B cell (primary cell): ENCODE measurements at regions of chr1 and their contacts with region 1.

Region 1: GRCh38 chr1:26787706-26788514 is at the start of gene PIGV:
- DNase-seq: peak; percentile 95
- ATAC-seq: peak; percentile 77
- H3K4me3 ChIP-seq: peak within 1 kb of the TSS; percentile 75 to 94 (median 91)
- H3K4me3 Mint-ChIP-seq: peak within 1 kb of the TSS; percentile 91
- H3K27ac ChIP-seq: peak within 1 kb of the TSS; percentile 82 to 86
- H3K27ac Mint-ChIP-seq: peak within 1 kb of the TSS; percentile 99
- H3K4me1 ChIP-seq: peaks cover 30 to 44% of the 10 kb centered on the region in 2 donors
- H3K4me1 Mint-ChIP-seq: peaks cover 48% of the 10 kb centered on the region
- H3K27me3 ChIP-seq: no peaks in the 10 kb centered on the region
- H3K27me3 Mint-ChIP-seq: no peaks in the 10 kb centered on the region
- CTCF ChIP-seq: no peak
- total RNA-seq, gene PIGV: 16.1 and 17.4 TPM in 2 replicates

Region 2: DNA sequence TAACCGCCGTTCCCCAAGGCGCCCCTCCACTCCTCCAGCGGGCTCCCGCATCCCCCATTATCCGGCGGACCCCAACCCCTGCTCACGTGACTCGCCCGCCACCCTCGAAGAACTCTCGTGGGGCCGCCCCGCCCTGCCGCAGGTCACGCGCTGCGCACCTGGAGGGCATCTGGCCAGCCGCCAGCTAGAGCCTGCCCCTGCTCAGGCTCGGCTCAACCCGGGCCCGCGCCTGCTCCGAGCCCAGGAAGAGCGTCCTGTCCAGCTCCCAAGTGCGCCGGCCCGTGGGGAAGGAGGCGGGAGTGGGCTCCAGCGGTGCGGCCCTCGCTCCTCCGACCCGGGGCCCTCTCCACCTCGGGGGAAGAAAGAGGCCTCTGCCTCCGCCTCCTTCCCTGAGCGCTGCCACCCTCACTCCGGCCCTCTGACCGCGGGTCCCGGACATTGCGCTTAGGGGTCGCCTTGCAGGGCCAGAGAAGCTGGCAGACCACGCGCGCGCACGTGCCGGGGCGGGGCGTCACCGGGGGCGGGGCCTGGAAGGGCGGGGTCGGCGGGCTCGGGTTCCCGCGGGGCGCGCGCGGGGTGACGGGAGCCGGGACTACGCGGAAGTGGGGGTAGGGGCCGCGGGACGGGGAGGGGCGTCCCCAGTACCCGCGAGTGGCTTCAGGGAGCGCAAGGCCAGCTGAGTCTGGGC is 287.3 kb before region 1 on chr1:
- CTCF ChIA-PET with region 1: interaction called, 37 read pairs
- POLR2A ChIA-PET with region 1: interaction called, 4 read pairs
- intact Hi-C with region 1: loop called (anchors 1 kb)
- DNase-seq: peak; percentile 96
- ATAC-seq: peak; percentile 75
- H3K4me3 ChIP-seq: peak overlapping the region in 4 of 5 experiments; percentile 74 to 93 (median 88)
- H3K4me3 Mint-ChIP-seq: peak overlapping the region; percentile 91
- H3K27ac ChIP-seq: peak overlapping the region; percentile 100
- H3K27ac Mint-ChIP-seq: peak overlapping the region; percentile 98
- H3K4me1 ChIP-seq: peaks cover 7 to 19% of the 10 kb centered on the region in 2 donors
- H3K4me1 Mint-ChIP-seq: peaks cover 8% of the 10 kb centered on the region
- H3K27me3 ChIP-seq: no peaks in the 10 kb centered on the region
- H3K27me3 Mint-ChIP-seq: no peaks in the 10 kb centered on the region
- CTCF ChIP-seq: peak; percentile 44

Region 3: GRCh38 chr1:26602378-26602959 is 185.4 kb before region 1 on chr1:
- CTCF ChIA-PET with region 1: interaction called, 479 read pairs
- POLR2A ChIA-PET with region 1: interaction called, 22 read pairs
- intact Hi-C with region 1: loop called (anchors 1 kb)
- DNase-seq: peak; percentile 78
- ATAC-seq: peak; percentile 62
- H3K4me3 ChIP-seq: no peak overlapping the region
- H3K4me3 Mint-ChIP-seq: no peak overlapping the region
- H3K27ac ChIP-seq: no peak overlapping the region
- H3K27ac Mint-ChIP-seq: no peak overlapping the region
- H3K4me1 ChIP-seq: peaks cover 0 to 5% of the 10 kb centered on the region in 2 donors
- H3K4me1 Mint-ChIP-seq: peaks cover 6% of the 10 kb centered on the region
- H3K27me3 ChIP-seq: no peaks in the 10 kb centered on the region
- H3K27me3 Mint-ChIP-seq: no peaks in the 10 kb centered on the region
- CTCF ChIP-seq: peak; percentile 92

Region 4: DNA sequence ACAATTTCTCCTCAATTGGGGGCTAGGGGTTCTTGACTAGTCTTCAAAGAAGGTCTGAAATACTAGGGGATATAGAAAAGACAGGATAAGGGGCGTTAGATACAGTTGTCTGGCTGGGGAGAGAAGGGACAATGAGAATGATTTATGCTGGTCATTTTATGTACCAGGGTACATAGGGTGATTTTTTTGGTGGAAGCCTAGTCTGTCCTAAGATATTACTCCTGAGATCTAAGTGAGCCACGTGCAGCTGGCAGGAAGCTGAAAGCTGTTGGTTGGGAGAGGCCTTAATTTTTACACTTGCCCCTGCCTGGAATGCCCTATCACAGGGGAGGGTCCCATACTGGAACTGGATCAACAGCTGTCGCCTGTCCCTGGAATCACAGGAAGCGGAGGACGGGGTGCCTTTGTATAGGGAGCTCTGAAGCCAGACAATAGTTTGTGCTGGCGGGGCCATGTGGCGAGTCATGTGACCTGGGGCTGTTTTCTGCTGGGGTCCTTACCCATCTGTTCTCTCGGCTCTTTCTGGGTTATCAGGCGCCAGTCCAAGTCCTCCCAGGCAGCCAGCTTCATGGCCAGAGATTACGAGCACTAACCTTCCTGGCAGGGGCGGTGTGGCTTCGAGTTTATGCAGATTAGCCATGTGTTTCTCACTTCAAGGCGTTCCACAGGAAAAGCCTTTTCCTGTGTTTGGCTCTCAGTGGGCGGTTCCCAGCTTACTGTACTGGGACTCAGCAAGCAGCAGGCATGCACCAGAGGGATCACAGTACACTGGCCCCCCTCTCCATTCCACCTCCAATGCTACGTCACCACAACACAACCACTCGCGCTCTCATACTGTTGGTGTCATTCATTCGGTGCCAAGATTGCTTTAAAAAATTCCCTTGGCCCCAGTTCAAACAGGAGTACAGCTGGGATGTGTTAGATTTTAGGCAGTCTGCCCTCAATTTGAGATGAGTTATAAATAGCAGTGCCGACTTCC is 64.6 kb before region 1 on chr1:
- CTCF ChIA-PET with region 1: interaction called, 12 read pairs
- POLR2A ChIA-PET with region 1: no interaction called
- intact Hi-C with region 1: no loop called
- DNase-seq: peak; percentile 45
- ATAC-seq: peak; percentile 44
- H3K4me3 ChIP-seq: peak overlapping the region in 3 of 5 experiments; percentile 21 to 53 (median 31)
- H3K4me3 Mint-ChIP-seq: peak overlapping the region; percentile 74
- H3K27ac ChIP-seq: peak overlapping the region; percentile 39 to 60
- H3K27ac Mint-ChIP-seq: peak overlapping the region; percentile 82
- H3K4me1 ChIP-seq: peaks cover 82 to 89% of the 10 kb centered on the region in 2 donors
- H3K4me1 Mint-ChIP-seq: peaks cover 85% of the 10 kb centered on the region
- H3K27me3 ChIP-seq: no peaks in the 10 kb centered on the region
- H3K27me3 Mint-ChIP-seq: no peaks in the 10 kb centered on the region
- CTCF ChIP-seq: no peak

Region 5: DNA sequence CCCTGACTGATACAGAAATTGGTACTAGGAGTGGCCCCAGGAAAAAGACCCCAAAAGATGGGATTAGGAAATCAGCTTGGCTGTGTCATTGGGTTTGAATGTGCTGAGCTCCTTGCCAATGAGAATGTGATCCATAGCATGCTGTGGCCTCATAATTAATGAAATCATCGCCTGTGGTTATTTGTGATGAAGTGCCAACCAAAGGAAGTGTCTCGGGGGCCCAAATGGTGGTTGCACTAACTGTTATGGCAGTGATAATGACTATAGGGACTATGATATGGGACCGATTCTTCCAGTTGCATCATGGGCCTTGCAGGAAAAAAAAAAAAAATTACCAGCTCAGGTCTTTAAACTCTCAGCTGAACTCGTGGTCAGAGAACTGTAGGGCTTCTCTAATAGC is 23.1 kb after region 1 on chr1:
- CTCF ChIA-PET with region 1: interaction called, 33 read pairs
- POLR2A ChIA-PET with region 1: no interaction called
- intact Hi-C with region 1: no loop called
- DNase-seq: no peak
- ATAC-seq: no peak
- H3K4me3 ChIP-seq: no peak overlapping the region
- H3K4me3 Mint-ChIP-seq: no peak overlapping the region
- H3K27ac ChIP-seq: no peak overlapping the region
- H3K27ac Mint-ChIP-seq: no peak overlapping the region
- H3K4me1 ChIP-seq: no peaks in the 10 kb centered on the region
- H3K4me1 Mint-ChIP-seq: peaks cover 3% of the 10 kb centered on the region
- H3K27me3 ChIP-seq: peaks cover 0 to 6% (median 0%) of the 10 kb centered on the region in 4 experiments
- H3K27me3 Mint-ChIP-seq: no peaks in the 10 kb centered on the region
- CTCF ChIP-seq: no peak

Region 6: GRCh38 chr1:26864610-26865527 is 77.0 kb after region 1 on chr1:
- CTCF ChIA-PET with region 1: interaction called, 7 read pairs
- POLR2A ChIA-PET with region 1: interaction called, 11 read pairs
- intact Hi-C with region 1: no loop called
- DNase-seq: peak; percentile 97
- ATAC-seq: peak; percentile 95
- H3K4me3 ChIP-seq: peak overlapping the region; percentile 80 to 99 (median 89)
- H3K4me3 Mint-ChIP-seq: peak overlapping the region; percentile 94
- H3K27ac ChIP-seq: peak overlapping the region; percentile 86 to 90
- H3K27ac Mint-ChIP-seq: peak overlapping the region; percentile 89
- H3K4me1 ChIP-seq: peaks cover 9 to 25% of the 10 kb centered on the region in 2 donors
- H3K4me1 Mint-ChIP-seq: peaks cover 20% of the 10 kb centered on the region
- H3K27me3 ChIP-seq: no peaks in the 10 kb centered on the region
- H3K27me3 Mint-ChIP-seq: no peaks in the 10 kb centered on the region
- CTCF ChIP-seq: no peak

Region 7: DNA sequence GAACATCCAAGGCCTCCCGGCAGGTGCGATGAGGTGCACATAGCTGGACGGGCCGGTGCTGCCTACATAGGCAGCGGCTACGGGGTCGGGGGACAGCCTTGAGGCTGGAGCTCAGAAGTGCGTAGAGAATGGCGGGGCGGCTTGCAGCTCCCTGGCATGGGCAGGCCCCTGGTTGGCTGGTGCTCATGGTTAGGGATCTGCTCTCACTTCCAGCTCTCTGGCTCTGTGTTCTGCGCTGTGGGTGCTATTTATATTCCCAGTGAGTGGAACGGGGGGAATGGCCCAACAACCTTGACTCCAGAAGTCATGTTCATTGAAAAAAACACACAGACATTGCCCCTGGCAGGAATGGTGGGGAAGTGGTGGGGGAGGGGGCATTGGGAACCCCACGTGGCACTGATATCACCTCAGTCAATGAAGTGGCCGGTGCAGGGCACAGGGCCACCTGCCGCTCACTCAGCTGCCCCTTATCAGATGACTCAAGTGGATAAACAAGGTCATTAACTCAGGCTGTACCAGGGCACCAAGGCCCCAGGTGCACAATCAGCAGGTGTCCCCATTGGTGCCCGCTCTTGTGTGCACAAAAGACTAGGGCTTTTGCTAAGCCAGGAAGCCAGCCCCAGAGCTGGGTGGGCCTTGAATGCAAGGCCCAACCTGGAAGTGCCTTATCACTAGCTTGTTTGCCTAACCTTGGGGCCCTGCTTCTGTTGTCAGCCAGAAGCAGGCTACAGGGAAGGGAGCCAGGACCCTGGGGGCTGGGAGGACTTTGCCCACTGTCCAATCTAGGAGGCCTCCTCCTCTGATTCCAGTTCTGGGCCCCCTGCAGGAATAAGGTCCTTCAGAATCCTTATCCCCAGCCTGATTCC is 126.1 kb after region 1 on chr1 and contains the start of gene NR0B2:
- CTCF ChIA-PET with region 1: no interaction called
- POLR2A ChIA-PET with region 1: no interaction called
- intact Hi-C with region 1: no loop called
- DNase-seq: no peak
- ATAC-seq: no peak
- H3K4me3 ChIP-seq: no peak within 1 kb of the TSS
- H3K4me3 Mint-ChIP-seq: no peak within 1 kb of the TSS
- H3K27ac ChIP-seq: no peak within 1 kb of the TSS
- H3K27ac Mint-ChIP-seq: no peak within 1 kb of the TSS
- H3K4me1 ChIP-seq: no peaks in the 10 kb centered on the region
- H3K4me1 Mint-ChIP-seq: no peaks in the 10 kb centered on the region
- H3K27me3 ChIP-seq: no peaks in the 10 kb centered on the region
- H3K27me3 Mint-ChIP-seq: peaks cover 5% of the 10 kb centered on the region
- CTCF ChIP-seq: no peak
- total RNA-seq, gene NR0B2: not detected in 2 replicates

Region 8: GRCh38 chr1:26949926-26950319 is 162.0 kb after region 1 on chr1:
- CTCF ChIA-PET with region 1: no interaction called
- POLR2A ChIA-PET with region 1: no interaction called
- intact Hi-C with region 1: no loop called
- DNase-seq: no peak
- ATAC-seq: no peak
- H3K4me3 ChIP-seq: no peak overlapping the region
- H3K4me3 Mint-ChIP-seq: no peak overlapping the region
- H3K27ac ChIP-seq: no peak overlapping the region
- H3K27ac Mint-ChIP-seq: no peak overlapping the region
- H3K4me1 ChIP-seq: no peaks in the 10 kb centered on the region
- H3K4me1 Mint-ChIP-seq: no peaks in the 10 kb centered on the region
- H3K27me3 ChIP-seq: no peaks in the 10 kb centered on the region
- H3K27me3 Mint-ChIP-seq: no peaks in the 10 kb centered on the region
- CTCF ChIP-seq: no peak